Endothelial cell of umbilical vein (primary cell): ENCODE measurements at regions of chr1 and their contacts with region 1.

Region 1: GRCh38 chr1:11496551-11497080 is 17.7 kb downstream of the DISP3 start:
- DNase-seq: no peak
- H3K4me3 ChIP-seq: no peak overlapping the region
- H3K27ac ChIP-seq: no peak overlapping the region
- H3K4me1 ChIP-seq: no peaks in the 10 kb centered on the region
- H3K27me3 ChIP-seq: no peaks in the 10 kb centered on the region
- CTCF ChIP-seq: no peak
- POLR2A ChIP-seq: no peak

Region 2: DNA sequence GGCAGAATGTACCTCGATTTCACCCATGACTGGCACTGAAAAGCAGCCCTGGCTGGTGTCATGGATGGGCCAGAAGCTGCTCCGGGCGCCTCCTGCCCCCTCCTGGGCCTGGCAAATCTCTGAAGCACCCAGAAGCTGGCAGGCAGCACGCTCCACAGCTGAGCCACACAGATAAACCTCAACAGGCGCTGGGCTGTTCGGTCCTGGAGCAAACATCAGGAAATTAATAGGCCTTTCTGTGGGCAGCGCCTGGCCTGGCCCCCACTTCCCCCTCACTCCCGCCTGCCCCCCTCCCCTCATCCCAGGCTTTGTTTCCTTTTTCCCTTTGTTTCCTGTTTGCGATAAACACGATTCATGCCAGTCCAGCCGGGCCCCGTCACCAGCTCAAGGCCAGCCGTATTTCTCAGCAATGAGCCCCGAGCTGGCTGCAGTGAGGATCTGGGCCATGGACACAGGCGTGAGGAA is 37.8 kb before region 1 on chr1:
- CTCF ChIA-PET with region 1: no interaction called
- POLR2A ChIA-PET with region 1: no interaction called
- dilution Hi-C with region 1: no loop called
- intact Hi-C with region 1: loop called (anchors 1 kb)
- DNase-seq: peak; percentile 67
- H3K4me3 ChIP-seq: no peak overlapping the region
- H3K27ac ChIP-seq: peak overlapping the region; percentile 45
- H3K4me1 ChIP-seq: peaks cover 10% of the 10 kb centered on the region
- H3K27me3 ChIP-seq: no peaks in the 10 kb centered on the region
- CTCF ChIP-seq: no peak
- POLR2A ChIP-seq: no peak

Region 3: DNA sequence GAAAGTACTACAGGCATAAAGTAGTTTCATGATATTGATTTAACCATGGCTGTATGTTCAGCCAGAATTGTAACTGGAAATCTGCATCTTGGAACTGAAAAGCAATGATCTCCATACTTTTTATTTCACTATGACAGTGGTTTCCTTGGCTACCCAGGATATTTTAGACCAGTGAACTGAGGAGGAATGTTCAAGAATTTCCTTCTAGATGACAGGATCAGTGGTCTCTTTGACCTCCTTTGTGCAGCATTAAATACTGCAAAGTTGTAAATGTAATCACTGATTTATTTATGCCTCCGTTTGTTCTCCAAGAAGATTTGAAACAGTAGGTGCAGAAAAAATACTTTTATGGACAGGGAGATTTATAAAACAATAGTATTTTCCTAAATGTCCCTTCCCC is 772.7 kb after region 1 on chr1:
- CTCF ChIA-PET with region 1: no interaction called
- POLR2A ChIA-PET with region 1: no interaction called
- dilution Hi-C with region 1: no loop called
- intact Hi-C with region 1: no loop called
- DNase-seq: no peak
- H3K4me3 ChIP-seq: no peak overlapping the region
- H3K27ac ChIP-seq: no peak overlapping the region
- H3K4me1 ChIP-seq: no peaks in the 10 kb centered on the region
- H3K27me3 ChIP-seq: no peaks in the 10 kb centered on the region
- CTCF ChIP-seq: no peak
- POLR2A ChIP-seq: no peak